GM10248 (cell line): ENCODE measurements at regions of chr7 and their contacts with region 1.

Region 1: DNA sequence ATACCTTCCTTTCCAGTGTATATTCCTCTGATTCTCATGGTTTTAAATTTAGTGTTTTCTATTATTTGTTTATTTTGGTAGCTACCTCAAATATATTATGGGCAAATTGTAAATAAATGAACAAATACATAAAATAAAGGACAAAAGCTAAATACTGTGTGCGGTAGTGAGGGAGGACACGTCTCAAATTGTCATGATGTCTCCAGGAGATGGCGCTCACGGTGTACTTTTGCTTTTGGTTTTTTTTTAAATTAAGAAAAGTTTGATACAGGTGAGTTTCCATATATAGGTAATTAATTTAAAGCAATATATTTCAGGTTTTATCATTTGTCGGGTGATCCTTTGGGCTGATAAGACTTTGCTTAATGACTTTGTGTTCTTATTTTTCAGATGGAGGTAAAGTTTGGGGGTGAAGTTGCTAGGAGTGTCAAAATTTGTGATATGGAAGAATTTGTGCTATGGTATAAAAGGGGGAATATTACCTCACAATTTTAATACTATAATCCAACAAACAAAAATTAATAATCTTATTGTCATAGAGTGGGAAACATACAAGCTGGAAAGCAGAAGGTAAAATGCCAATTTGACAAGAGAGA is 68.4 kb upstream of the TMEM229A start:
- DNase-seq: no peak
- CTCF ChIP-seq: peak; percentile 49

Region 2: DNA sequence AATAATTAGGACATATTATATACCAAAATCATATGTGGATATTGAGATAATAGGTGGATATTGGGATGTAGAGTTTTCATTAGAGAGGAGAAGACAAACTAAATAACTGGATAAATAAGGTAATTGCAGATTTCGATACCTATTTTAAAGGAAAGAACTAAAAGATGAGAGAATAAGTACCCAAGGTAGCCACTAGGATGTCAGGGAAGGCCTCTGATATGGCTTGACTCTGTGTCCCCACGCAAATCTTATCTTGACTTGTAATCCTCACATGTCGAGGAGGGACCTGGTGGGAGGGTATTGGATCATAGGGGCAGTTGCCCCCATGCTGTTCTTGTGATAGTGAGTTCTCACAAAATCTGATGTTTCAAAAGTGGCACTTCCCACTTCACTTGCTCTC is 23.7 kb before region 1 on chr7:
- CTCF ChIA-PET with region 1: no interaction called
- POLR2A ChIA-PET with region 1: no interaction called
- DNase-seq: no peak
- CTCF ChIP-seq: no peak

Region 3: GRCh38 chr7:124088590-124088989 is 12.7 kb before region 1 on chr7:
- CTCF ChIA-PET with region 1: interaction called, 15 read pairs
- POLR2A ChIA-PET with region 1: no interaction called
- DNase-seq: no peak
- CTCF ChIP-seq: no peak

Region 4: DNA sequence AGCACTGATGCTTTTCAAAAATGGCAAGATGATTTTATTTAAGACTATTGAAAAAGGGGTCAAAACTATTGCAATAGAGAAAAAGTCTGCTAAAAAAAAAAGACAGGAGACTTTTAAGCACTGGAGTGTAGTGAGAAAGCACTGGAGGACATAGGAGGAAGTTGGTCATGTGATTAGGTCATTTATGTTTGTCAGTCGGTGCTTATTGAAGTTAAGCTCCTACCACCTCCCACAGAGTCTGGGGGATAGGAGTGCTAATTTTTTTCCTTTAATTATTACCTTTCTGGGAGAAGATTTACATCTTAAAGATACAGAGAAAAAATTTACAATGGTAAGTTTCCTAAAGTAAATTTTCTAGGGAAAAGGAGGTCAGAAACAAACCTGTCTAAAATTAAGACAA is 11.8 kb after region 1 on chr7:
- CTCF ChIA-PET with region 1: interaction called, 13 read pairs
- POLR2A ChIA-PET with region 1: no interaction called
- DNase-seq: no peak
- CTCF ChIP-seq: no peak

Region 5: DNA sequence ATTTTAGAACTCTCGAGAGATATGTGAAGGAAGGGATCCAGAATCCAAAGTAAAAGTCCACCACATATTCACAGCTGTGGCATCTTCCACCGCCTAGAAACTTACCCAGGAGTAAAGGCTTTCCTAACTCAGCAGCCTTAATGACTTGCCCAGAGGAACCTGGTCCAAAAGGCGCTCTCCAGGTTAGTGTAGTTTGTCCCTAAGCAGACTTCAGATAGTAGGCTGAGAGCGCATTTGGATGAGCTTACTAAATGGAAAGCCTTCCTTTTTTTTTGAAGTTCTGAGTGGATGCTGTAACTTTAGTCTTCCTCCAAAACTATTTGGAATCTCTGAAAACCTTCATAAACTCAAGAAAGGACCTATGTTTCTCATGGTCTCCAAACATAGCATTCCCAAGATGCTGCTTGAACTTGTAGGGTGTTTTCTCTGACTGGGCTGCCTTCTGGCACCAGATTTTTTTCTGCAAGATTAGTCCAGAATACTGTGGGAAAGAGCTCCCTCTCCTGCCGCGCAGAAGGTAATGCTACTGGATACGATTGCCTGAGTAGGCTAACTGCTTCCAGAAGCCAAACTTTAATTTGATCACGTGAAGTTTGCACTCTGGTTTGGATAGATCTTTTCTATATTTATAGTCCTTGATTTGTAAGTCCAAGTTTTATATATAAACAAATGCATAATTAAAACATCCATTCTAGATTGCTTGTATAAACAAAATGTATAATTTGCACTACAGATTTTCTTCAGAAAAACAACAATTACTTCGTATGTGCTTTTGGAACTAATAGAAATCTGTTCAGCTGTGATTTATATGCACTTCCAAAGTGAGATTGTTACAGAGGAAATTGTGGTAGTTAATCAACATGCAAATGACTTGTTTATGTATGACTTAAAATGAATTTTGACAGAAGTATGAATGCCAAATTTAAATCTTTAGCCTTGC is 683.9 kb after region 1 on chr7:
- CTCF ChIA-PET with region 1: interaction called, 15 read pairs
- POLR2A ChIA-PET with region 1: no interaction called
- DNase-seq: peak; percentile 49
- CTCF ChIP-seq: peak; percentile 74